AG04450 (cell line): ENCODE measurements at regions of chr1 and their contacts with region 1.

Region 1: GRCh38 chr1:93734999-93735398 is 53.4 kb upstream of the BCAR3 start:
- DNase-seq: no peak
- H3K4me3 ChIP-seq: no peak overlapping the region
- H3K27ac ChIP-seq: no peak overlapping the region
- H3K27me3 ChIP-seq: no peaks in the 10 kb centered on the region
- CTCF ChIP-seq: peak; percentile 44

Region 2: DNA sequence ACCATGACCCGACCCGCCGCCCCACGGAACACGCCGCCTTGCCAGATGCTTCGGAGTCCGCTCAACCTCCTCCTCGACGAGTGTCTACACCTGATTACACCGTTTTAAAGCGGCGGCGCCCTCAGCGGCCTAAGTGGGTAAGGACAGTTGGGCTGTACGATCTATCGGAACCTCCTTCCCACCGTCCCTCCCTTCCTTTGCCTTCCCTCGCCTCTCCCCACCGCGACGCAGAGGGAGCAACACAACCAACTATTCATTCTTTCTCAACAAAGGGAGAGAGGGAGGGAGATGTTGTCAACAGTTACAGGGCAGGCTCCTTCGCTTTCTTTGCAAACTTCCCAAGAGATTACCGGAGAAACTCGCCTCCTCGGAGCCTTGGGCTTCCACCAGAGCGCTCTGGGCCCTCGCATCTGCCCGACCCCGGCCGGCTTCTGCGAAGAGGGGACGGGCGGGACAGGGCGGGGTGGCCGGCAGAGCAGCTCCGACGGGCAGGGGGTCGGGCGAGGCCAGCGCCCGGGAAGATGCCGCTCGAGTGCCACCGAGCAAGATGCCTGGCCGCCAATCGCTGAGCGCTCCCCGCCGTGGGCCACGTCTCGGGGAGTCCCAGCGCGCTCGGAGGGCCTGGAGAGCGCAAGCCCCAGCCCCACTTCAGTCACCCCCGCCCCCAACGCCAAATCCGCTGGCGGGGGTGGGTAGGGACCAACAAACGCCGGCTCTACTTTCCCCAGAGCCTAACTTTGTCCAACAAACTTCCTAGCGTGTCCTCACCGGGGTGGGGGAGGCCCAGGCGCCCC is 54.0 kb before region 1 on chr1:
- CTCF ChIA-PET with region 1: interaction called, 11 read pairs
- POLR2A ChIA-PET with region 1: interaction called, 9 read pairs
- DNase-seq: peak; percentile 59
- H3K4me3 ChIP-seq: peak overlapping the region; percentile 78
- H3K27ac ChIP-seq: peak overlapping the region; percentile 91
- H3K27me3 ChIP-seq: no peaks in the 10 kb centered on the region
- CTCF ChIP-seq: peak; percentile 70

Region 3: DNA sequence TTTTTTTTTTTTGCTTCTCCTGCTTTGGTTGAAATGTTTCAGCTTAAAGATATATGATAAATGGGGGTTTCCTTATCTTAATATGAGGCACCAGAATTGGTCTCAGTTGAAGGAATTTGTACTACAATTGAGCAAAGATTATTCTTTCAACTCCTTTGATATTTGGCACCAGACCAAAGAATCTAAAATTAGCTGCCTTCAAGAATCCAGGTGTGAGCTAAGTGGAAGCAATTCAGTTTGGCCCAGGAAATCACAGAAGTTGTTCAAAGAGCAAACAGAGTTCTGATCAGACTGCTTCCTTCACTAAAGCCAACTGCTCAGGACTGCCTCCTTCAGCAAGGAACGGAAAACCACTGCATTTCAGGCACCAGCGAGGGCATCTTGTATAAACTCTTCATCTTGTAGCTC is 14.9 kb after region 1 on chr1:
- CTCF ChIA-PET with region 1: interaction called, 10 read pairs
- POLR2A ChIA-PET with region 1: interaction called, 6 read pairs
- DNase-seq: no peak
- H3K4me3 ChIP-seq: no peak overlapping the region
- H3K27ac ChIP-seq: no peak overlapping the region
- H3K27me3 ChIP-seq: no peaks in the 10 kb centered on the region
- CTCF ChIP-seq: peak; percentile 30

Region 4: GRCh38 chr1:93798301-93798700 is 63.3 kb after region 1 on chr1:
- CTCF ChIA-PET with region 1: interaction called, 12 read pairs
- POLR2A ChIA-PET with region 1: interaction called, 3 read pairs
- DNase-seq: peak; percentile 71
- H3K4me3 ChIP-seq: no peak overlapping the region
- H3K27ac ChIP-seq: no peak overlapping the region
- H3K27me3 ChIP-seq: no peaks in the 10 kb centered on the region
- CTCF ChIP-seq: no peak

Region 5: DNA sequence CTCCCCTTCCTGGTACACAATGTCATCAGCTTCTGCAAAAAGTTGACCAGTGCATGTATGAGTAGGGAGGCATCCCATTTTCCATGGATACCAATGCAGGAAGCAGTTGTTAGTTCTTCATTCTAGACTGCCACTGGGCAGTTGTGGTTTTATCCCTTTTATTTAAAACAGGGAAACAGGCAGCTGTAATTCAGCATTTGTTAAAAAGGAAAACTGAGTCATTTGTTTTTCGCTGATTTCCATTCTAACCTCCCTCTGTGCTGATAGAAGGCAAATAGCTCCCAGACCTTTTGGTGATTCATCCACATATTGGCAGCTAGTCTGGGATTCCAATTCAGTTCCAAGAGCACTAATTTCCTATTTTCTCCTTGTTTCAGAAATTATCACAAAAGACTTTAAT is 407.0 kb after region 1 on chr1:
- CTCF ChIA-PET with region 1: no interaction called
- POLR2A ChIA-PET with region 1: no interaction called
- DNase-seq: no peak
- H3K4me3 ChIP-seq: no peak overlapping the region
- H3K27ac ChIP-seq: no peak overlapping the region
- H3K27me3 ChIP-seq: no peaks in the 10 kb centered on the region
- CTCF ChIP-seq: no peak